Thyroid gland (tissue), 4 donors: ENCODE measurements at regions of chr4 and their contacts with region 1.

Region 1: GRCh38 chr4:143335979-143336780 is 496 bp upstream of the GAB1 start:
- DNase-seq: peak; percentile 87 to 88
- H3K4me3 ChIP-seq: peak overlapping the region; percentile 46 to 93 (median 85)
- H3K27ac ChIP-seq: peak overlapping the region; percentile 95
- H3K4me1 ChIP-seq: peaks cover 0 to 5% of the 10 kb centered on the region in 2 donors
- H3K27me3 ChIP-seq: no peaks in the 10 kb centered on the region
- CTCF ChIP-seq: no peak
- POLR2A ChIP-seq: peak in 1 of 2 donors; percentile 70

Region 2: DNA sequence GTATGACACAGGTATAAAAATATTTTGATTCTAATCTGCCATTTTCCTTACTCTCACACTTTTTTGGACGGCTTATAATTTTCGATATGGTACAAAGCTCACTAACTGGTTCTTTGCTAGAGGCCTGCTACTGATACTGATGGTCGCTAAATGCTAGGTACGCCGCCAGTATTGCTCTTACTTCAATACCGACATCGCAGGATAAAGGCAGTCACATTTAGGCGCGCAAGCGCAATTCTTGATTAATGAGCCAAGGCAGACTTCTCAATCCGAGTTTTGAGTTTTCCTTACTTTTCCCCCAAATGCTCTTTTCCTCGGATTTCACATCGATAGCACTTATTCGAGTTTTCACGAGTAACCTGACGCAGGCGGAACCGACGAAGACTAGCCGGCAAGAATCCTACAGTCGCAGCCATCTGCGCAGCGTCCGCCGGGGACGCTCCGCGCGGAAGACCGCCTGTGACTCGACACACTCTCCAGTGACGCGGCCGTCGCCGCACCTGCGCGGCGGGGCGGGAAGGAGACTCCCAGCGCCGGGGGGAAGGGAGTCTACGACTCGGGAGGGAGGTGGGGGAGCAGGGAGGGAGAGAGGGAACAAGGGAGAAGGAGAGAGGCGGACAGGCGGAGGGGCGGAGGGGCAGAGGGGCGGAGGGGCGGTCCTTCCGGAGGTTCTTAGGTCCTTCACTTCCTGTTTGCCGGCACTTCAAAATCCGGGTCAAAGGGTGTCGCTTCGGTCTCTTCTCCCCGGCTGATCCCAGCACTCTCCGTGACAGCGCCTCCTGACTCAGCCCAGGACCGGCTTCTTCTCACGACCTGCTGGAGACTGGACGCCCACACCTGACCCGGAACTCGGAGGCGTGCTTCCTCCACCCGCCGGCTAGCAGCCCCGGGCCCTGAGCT is 151.7 kb before region 1 on chr4 and contains the start of gene USP38:
- intact Hi-C with region 1: loop called (anchors 10 kb)
- DNase-seq: peak; percentile 96 to 98
- H3K4me3 ChIP-seq: peak within 1 kb of the TSS; percentile 71 to 95 (median 82)
- H3K27ac ChIP-seq: peak within 1 kb of the TSS; percentile 88 to 96 (median 93)
- H3K4me1 ChIP-seq: peaks cover 23 to 25% of the 10 kb centered on the region in 2 donors
- H3K27me3 ChIP-seq: no peaks in the 10 kb centered on the region
- CTCF ChIP-seq: peak in 3 of 6 experiments; percentile 7 to 30 (median 10)
- POLR2A ChIP-seq: peak; percentile 47 to 92
- total RNA-seq, gene USP38: 21.8 to 39.8 (median 29.9) TPM

Region 3: GRCh38 chr4:143399113-143399949 is 63.2 kb after region 1 on chr4:
- intact Hi-C with region 1: loop called (anchors 10 kb)
- DNase-seq: no peak
- H3K4me3 ChIP-seq: no peak overlapping the region
- H3K27ac ChIP-seq: no peak overlapping the region
- H3K4me1 ChIP-seq: peaks cover 17 to 29% of the 10 kb centered on the region in 2 donors
- H3K27me3 ChIP-seq: no peaks in the 10 kb centered on the region
- CTCF ChIP-seq: peak in 5 of 6 experiments; percentile 32 to 70 (median 50)
- POLR2A ChIP-seq: no peak